ENCODE measurements at regions of chr18 and their contacts with region 1.

Region 1: GRCh38 chr18:6239716-6240115 is 175.0 kb downstream of the L3MBTL4 start:
- DNase-seq: no peak
- H3K4me3 ChIP-seq: no peak overlapping the region
- H3K27ac ChIP-seq: no peak overlapping the region
- H3K4me1 ChIP-seq: no peaks in the 10 kb centered on the region
- CTCF ChIP-seq: no peak

Region 2: GRCh38 chr18:6219116-6219717 is 20.5 kb before region 1 on chr18:
- CTCF ChIA-PET with region 1: no interaction called
- POLR2A ChIA-PET with region 1: no interaction called
- intact Hi-C with region 1: no loop called
- DNase-seq: peak; percentile 29
- H3K4me3 ChIP-seq: no peak overlapping the region
- H3K27ac ChIP-seq: no peak overlapping the region
- H3K4me1 ChIP-seq: no peaks in the 10 kb centered on the region
- CTCF ChIP-seq: peak; percentile 73

Region 3: DNA sequence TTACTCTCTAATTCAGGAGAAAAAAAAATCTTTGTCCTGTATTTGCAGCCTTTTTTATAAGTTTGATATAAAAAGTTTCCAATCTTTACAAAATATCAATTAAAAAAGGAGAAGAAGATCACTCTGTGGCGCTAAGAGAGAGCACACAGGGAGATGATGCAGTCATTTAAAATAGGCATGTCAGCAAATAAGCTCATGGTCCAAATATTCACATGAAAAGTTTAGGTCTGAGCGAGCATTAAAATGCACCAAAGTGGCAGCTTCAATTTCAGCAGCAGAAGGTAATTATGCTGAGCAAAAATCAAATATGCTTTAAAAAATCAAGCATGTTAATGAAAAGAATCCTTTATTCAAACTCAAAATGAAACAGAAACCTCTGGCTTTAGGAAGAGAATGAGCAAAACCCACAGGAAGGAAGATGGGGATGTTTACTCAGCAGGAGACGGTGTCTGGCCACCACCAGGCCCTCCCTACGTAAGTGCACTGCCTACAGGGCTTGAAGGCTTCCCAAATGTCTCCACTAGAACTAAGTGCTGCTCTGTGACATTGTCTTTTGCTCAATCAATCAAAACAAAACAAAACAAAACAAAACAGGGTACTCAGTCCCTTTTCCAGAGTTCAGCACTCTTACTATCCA is 54.5 kb after region 1 on chr18:
- CTCF ChIA-PET with region 1: no interaction called
- POLR2A ChIA-PET with region 1: no interaction called
- intact Hi-C with region 1: loop called (anchors 10 kb)
- DNase-seq: no peak
- H3K4me3 ChIP-seq: no peak overlapping the region
- H3K27ac ChIP-seq: no peak overlapping the region
- H3K4me1 ChIP-seq: no peaks in the 10 kb centered on the region
- CTCF ChIP-seq: no peak